GM12878 (cell line): ENCODE measurements at regions of chr2 and their contacts with region 1.

Region 1: GRCh38 chr2:88627056-88627855 is at the start of gene EIF2AK3:
- DNase-seq: peak; percentile 100
- ATAC-seq: peak; percentile 90
- H3K4me3 ChIP-seq: peak within 1 kb of the TSS; percentile 79
- H3K27ac ChIP-seq: peak within 1 kb of the TSS; percentile 91
- H3K4me1 ChIP-seq: peaks cover 4% of the 10 kb centered on the region; the same call in 1 of the 2 replicates
- H3K27me3 ChIP-seq: no peaks in the 10 kb centered on the region
- CTCF ChIP-seq: no peak
- EP300 ChIP-seq: no peak
- POLR2A ChIP-seq: peak; percentile 93
- RAD21 ChIP-seq: no peak
- polyA plus RNA-seq, gene EIF2AK3: 5.0 to 8.2 TPM

Region 2: DNA sequence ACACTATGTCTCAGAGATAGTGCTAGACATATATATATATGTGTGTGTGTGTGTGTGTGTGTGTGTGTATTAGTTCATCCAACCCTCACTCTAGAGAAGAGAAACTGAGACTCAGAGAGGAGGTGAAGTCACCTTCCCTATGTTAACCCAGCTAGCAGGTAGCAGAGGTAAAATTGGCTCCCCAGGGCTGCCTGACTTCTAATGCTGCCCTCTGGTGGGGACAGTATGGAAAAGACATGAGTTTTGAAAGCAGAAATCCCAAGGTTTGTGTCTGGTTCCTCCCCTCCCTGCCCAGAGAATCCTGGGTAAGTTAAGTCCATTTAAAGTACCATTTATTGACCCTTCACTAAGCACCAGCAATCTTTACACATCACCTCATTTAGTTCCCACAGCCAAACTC is 319.4 kb before region 1 on chr2:
- CTCF ChIA-PET with region 1: no interaction called
- POLR2A ChIA-PET with region 1: no interaction called
- RAD21 ChIA-PET with region 1: no interaction called
- SMC1A ChIA-PET with region 1: no interaction called
- in situ Hi-C with region 1: no loop called
- intact Hi-C with region 1: no loop called
- DNase-seq: no peak
- ATAC-seq: peak; percentile 56
- H3K4me3 ChIP-seq: no peak overlapping the region
- H3K27ac ChIP-seq: no peak overlapping the region
- H3K4me1 ChIP-seq: no peaks in the 10 kb centered on the region
- H3K27me3 ChIP-seq: no peaks in the 10 kb centered on the region
- CTCF ChIP-seq: peak; percentile 35 to 48 (median 46); a peak in 5 of 6 replicates
- EP300 ChIP-seq: no peak
- POLR2A ChIP-seq: no peak
- RAD21 ChIP-seq: peak; percentile 32; the same call in 1 of the 2 replicates

Region 3: DNA sequence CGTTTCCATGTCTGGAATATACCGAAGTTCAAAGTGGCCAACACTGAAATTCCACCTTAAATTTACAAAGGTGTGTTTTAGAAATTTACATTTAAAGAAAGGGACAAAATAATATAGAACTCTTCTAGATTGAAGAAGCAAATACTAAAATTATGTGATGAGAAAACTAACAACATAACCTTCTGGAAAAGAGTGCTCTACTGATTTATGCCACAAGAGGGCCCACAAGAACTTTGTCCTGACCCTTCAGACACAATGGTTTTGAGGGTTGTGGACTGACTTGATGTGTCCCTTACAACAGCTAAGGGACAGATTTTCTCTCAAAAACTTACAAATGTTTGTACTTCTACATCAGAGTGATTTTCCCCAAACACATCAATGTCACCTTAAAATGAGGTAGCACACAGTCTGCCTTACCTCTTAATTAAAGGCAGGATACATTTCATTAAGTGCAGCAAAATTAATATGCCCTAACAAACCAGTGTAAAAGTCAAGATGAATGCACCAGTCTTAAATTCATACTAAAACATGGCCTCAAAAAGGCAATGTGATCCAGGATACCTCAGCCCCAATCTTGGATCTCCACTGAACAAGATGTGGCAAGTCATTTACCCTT is 36.1 kb before region 1 on chr2:
- CTCF ChIA-PET with region 1: interaction called, 14 read pairs
- POLR2A ChIA-PET with region 1: interaction called, 5 read pairs
- RAD21 ChIA-PET with region 1: interaction called, 18 read pairs
- SMC1A ChIA-PET with region 1: interaction called, 14 read pairs
- in situ Hi-C with region 1: no loop called
- intact Hi-C with region 1: loop called (anchors 2 kb)
- DNase-seq: peak; percentile 45
- ATAC-seq: peak; percentile 94
- H3K4me3 ChIP-seq: no peak overlapping the region
- H3K27ac ChIP-seq: no peak overlapping the region
- H3K4me1 ChIP-seq: no peaks in the 10 kb centered on the region
- H3K27me3 ChIP-seq: no peaks in the 10 kb centered on the region
- CTCF ChIP-seq: peak; percentile 73 to 90 (median 74)
- EP300 ChIP-seq: no peak
- POLR2A ChIP-seq: no peak
- RAD21 ChIP-seq: peak; percentile 98

Region 4: GRCh38 chr2:88600038-88600465 is 27.2 kb before region 1 on chr2:
- CTCF ChIA-PET with region 1: interaction called, 36 read pairs
- POLR2A ChIA-PET with region 1: interaction called, 73 read pairs
- RAD21 ChIA-PET with region 1: interaction called, 45 read pairs
- SMC1A ChIA-PET with region 1: interaction called, 231 read pairs
- in situ Hi-C with region 1: no loop called
- intact Hi-C with region 1: loop called (anchors 1 kb)
- DNase-seq: peak; percentile 98
- ATAC-seq: peak; percentile 97
- H3K4me3 ChIP-seq: peak overlapping the region; percentile 14; the same call in 1 of the 2 replicates
- H3K27ac ChIP-seq: peak overlapping the region; percentile 61
- H3K4me1 ChIP-seq: peaks cover 36% of the 10 kb centered on the region
- H3K27me3 ChIP-seq: no peaks in the 10 kb centered on the region
- CTCF ChIP-seq: no peak
- EP300 ChIP-seq: peak; percentile 86 to 96
- POLR2A ChIP-seq: no peak
- RAD21 ChIP-seq: 0 out of 2 replicates have a peak, but pooled peaks have one; percentile 4

Region 5: GRCh38 chr2:88606371-88607030 is 20.8 kb before region 1 on chr2:
- CTCF ChIA-PET with region 1: interaction called, 36 read pairs
- POLR2A ChIA-PET with region 1: interaction called, 73 read pairs
- RAD21 ChIA-PET with region 1: interaction called, 45 read pairs
- SMC1A ChIA-PET with region 1: interaction called, 231 read pairs
- in situ Hi-C with region 1: no loop called
- intact Hi-C with region 1: loop called (anchors 2 kb)
- DNase-seq: peak; percentile 68
- ATAC-seq: peak; percentile 87
- H3K4me3 ChIP-seq: no peak overlapping the region
- H3K27ac ChIP-seq: peak overlapping the region; percentile 66
- H3K4me1 ChIP-seq: peaks cover 51% of the 10 kb centered on the region
- H3K27me3 ChIP-seq: no peaks in the 10 kb centered on the region
- CTCF ChIP-seq: no peak
- EP300 ChIP-seq: peak in 1 of 2 experiments; percentile 99; a peak in 3 of 4 replicates
- POLR2A ChIP-seq: no peak
- RAD21 ChIP-seq: no peak

Region 6: DNA sequence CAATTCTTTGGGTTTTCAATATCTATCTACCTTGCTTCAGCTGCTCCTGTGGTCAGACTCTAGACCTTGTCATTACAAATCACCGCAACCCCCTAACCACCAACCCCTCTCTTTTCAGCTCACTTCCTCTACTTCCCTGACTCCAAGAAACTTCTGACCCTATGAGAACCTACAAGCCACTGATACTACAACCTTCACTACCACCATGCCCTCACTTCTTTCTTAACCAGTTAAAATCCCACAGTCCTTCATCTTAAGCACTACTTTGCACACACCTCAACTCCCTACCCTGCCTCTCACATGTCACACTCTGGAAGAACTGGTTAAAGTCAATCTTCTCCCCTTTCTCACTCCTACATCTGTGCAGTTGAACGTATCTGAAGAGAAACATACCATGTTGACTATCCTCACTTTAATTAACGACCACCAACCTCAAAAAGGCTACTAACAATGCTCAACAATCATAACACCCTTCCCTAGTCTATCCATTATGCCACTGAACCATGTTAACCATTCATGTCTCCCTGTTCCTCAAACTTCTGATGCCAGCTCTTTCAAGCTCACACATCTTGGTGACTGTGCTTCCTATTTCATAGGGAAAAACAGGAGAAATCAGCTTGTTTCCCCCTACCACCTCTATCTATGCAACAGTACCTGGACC is 12.6 kb before region 1 on chr2:
- CTCF ChIA-PET with region 1: interaction called, 36 read pairs
- POLR2A ChIA-PET with region 1: interaction called, 27 read pairs
- RAD21 ChIA-PET with region 1: interaction called, 16 read pairs
- SMC1A ChIA-PET with region 1: interaction called, 231 read pairs
- in situ Hi-C with region 1: no loop called
- intact Hi-C with region 1: no loop called
- DNase-seq: peak; percentile 76
- ATAC-seq: peak; percentile 81
- H3K4me3 ChIP-seq: peak overlapping the region; percentile 8
- H3K27ac ChIP-seq: peak overlapping the region; percentile 80
- H3K4me1 ChIP-seq: peaks cover 36% of the 10 kb centered on the region
- H3K27me3 ChIP-seq: no peaks in the 10 kb centered on the region
- CTCF ChIP-seq: no peak
- EP300 ChIP-seq: peak; percentile 61 to 71; a peak in 3 of 4 replicates
- POLR2A ChIP-seq: no peak
- RAD21 ChIP-seq: no peak

Region 7: DNA sequence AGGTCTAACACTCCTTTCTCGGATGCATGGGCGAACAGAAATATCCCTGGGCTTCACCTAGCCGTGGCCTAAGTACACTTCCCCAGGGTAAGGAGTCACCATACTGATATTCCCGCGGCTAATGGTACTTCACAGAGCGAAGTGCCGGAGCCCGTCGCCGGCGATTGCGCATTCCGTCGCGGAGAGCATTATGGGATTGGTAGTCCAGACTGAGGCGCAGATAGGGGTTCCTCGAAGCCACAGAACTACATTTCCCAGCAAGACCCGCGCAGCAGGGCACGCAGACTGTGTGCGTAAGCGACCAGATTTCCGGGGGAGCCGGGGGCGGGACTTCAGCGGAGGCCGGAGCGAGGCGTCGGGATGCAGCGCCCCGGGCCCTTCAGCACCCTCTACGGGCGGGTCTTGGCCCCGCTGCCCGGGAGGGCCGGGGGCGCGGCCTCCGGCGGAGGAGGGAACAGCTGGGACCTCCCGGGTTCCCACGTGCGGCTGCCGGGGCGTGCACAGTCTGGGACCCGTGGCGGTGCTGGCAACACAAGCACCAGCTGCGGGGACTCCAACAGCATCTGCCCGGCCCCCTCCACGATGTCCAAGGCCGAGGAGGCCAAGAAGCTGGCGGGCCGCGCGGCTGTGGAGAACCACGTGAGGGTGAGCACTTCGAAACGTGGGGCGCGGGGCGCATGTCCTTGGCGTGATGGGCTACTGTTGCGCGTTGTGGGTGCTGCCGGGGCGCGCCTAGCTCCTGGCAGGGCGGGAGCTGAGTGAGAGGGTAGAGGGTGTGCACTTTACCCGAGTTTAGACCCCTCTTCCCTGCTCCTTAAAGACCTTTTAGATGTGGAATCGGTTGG is 64.3 kb after region 1 on chr2 and contains the start of gene RPIA:
- CTCF ChIA-PET with region 1: no interaction called
- POLR2A ChIA-PET with region 1: interaction called, 3 read pairs
- RAD21 ChIA-PET with region 1: no interaction called
- SMC1A ChIA-PET with region 1: no interaction called
- in situ Hi-C with region 1: no loop called
- intact Hi-C with region 1: loop called (anchors 5 kb)
- DNase-seq: peak; percentile 94
- ATAC-seq: peak; percentile 92
- H3K4me3 ChIP-seq: peak within 1 kb of the TSS; percentile 98
- H3K27ac ChIP-seq: peak within 1 kb of the TSS; percentile 76
- H3K4me1 ChIP-seq: peaks cover 3% of the 10 kb centered on the region
- H3K27me3 ChIP-seq: no peaks in the 10 kb centered on the region
- CTCF ChIP-seq: peak; percentile 58 to 81 (median 80)
- EP300 ChIP-seq: no peak
- POLR2A ChIP-seq: peak; percentile 87
- RAD21 ChIP-seq: no peak
- polyA plus RNA-seq, gene RPIA: 9.4 to 17.7 TPM

Region 8: DNA sequence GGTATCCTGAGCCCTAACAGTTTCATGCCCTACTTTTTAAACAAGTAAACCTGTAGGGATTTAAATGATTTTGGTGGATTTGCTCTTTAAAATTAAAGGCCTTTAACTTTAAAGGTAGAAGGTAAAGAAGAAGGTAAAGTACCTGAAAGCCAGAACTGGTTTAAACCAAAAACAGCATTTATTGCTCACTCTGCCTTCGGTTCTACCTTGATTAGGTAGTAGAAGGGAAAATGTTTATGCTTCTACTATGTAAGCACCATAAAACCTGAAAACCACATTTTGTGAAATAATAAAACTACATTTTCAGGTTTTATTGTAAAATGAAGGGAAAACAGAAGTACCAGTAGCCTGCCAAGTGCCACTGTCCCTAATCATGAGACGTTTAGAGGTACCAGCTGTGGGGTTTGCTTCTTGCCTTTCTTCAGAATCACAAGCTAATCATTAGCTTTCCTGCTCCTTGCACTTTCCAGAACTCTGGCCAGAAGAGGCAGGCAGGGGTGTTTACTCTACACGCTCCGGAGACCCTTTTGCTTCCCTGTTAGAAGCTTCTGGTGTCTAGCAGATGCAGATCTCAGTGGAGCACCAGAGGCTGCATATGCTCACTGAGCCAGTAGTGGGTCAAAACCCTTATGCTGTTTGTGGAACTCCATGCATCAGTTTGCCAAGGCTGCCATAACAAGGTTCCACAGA is 97.5 kb after region 1 on chr2:
- CTCF ChIA-PET with region 1: no interaction called
- POLR2A ChIA-PET with region 1: no interaction called
- RAD21 ChIA-PET with region 1: no interaction called
- SMC1A ChIA-PET with region 1: no interaction called
- in situ Hi-C with region 1: no loop called
- intact Hi-C with region 1: no loop called
- DNase-seq: no peak
- ATAC-seq: no peak
- H3K4me3 ChIP-seq: no peak overlapping the region
- H3K27ac ChIP-seq: no peak overlapping the region
- H3K4me1 ChIP-seq: no peaks in the 10 kb centered on the region
- H3K27me3 ChIP-seq: no peaks in the 10 kb centered on the region
- CTCF ChIP-seq: no peak
- EP300 ChIP-seq: no peak
- POLR2A ChIP-seq: no peak
- RAD21 ChIP-seq: no peak

Region 9: DNA sequence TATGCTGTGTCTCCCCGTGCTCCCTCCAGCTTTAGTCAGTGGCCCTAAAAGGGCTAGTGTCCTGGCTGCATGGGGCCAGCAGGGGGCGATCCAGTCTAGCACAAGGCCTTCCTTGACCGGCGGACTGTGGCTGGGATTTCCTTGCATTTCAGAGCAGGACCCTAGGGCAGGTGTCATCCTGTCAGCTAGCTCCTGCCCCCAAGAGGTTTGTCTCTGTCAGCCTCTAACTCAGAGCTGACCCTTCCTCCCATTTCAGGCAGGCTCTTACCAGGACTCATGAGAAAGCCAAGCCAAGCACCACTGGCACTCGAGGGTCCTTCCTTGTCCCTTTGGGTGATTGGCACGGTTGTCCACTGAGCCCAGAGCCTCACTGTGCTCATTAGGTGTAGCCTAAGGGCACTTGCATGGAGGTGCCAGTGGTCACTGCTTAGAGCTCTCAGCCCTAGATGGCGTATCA is 204.6 kb after region 1 on chr2:
- CTCF ChIA-PET with region 1: no interaction called
- POLR2A ChIA-PET with region 1: no interaction called
- RAD21 ChIA-PET with region 1: no interaction called
- SMC1A ChIA-PET with region 1: no interaction called
- in situ Hi-C with region 1: no loop called
- intact Hi-C with region 1: no loop called
- DNase-seq: no peak
- ATAC-seq: peak; percentile 98
- H3K4me3 ChIP-seq: no peak overlapping the region
- H3K27ac ChIP-seq: no peak overlapping the region; the same call in 1 of the 2 replicates
- H3K4me1 ChIP-seq: no peaks in the 10 kb centered on the region
- H3K27me3 ChIP-seq: no peaks in the 10 kb centered on the region
- CTCF ChIP-seq: peak; percentile 88 to 95 (median 89)
- EP300 ChIP-seq: no peak
- POLR2A ChIP-seq: no peak
- RAD21 ChIP-seq: peak; percentile 90

Region 10: GRCh38 chr2:89000235-89000634 is 373.0 kb after region 1 on chr2:
- CTCF ChIA-PET with region 1: no interaction called
- POLR2A ChIA-PET with region 1: no interaction called
- RAD21 ChIA-PET with region 1: no interaction called
- SMC1A ChIA-PET with region 1: no interaction called
- in situ Hi-C with region 1: no loop called
- intact Hi-C with region 1: no loop called
- DNase-seq: no peak
- ATAC-seq: no peak
- H3K4me3 ChIP-seq: no peak overlapping the region
- H3K27ac ChIP-seq: no peak overlapping the region
- H3K4me1 ChIP-seq: no peaks in the 10 kb centered on the region
- H3K27me3 ChIP-seq: no peaks in the 10 kb centered on the region
- CTCF ChIP-seq: no peak
- EP300 ChIP-seq: no peak
- POLR2A ChIP-seq: no peak
- RAD21 ChIP-seq: no peak